Right ventricle myocardium superior (tissue), 1 donor: ENCODE measurements at regions of chr12 and their contacts with region 1.

Region 1: GRCh38 chr12:127108360-127109215 is 1158.4 kb upstream of the TMEM132C start:
- DNase-seq: peak; percentile 63
- ATAC-seq: peak; percentile 79

Region 2: DNA sequence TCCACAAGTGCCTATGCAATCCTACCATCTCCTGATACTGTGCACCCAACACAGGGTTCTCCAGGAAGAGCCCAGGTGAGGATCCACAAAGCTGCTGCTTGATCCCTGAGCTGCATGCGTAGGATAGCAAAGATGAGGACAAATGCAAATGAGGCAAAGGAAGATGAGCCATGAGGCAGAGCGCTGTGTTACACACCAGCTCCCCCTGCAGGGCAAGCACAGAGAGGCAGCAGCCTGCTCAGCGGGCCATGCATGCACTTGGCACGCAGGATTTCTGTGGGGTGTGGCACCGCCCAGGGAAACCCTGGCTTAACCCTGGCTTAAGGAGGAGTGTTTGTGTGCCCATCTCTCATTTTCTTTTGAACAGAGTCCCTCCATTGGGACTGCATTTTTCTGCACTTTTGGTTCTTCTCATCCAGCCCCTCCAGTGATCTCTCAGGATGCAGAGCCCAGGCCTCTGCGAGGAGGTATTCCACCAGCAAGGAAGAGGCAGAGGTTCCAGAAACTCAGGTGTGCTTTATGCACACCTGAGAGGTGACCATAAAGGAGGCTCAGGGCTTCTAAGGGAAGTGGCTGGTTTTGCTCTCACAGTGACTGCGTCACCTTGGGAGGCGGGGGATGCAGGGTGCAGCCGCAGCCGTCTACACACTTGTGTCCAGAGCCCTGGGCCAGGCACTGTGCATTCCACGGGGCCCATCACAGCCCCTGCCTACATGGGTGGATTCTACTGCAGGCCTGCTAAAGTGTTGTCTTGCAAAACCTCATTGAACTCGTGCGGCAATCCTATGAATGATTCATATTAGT is 185.1 kb after region 1 on chr12:
- intact Hi-C with region 1: loop called (anchors 10 kb)
- DNase-seq: peak; percentile 68
- ATAC-seq: peak; percentile 58

Region 3: GRCh38 chr12:127381048-127381668 is 272.6 kb after region 1 on chr12:
- intact Hi-C with region 1: loop called (anchors 5 kb)
- DNase-seq: peak; percentile 43
- ATAC-seq: peak; percentile 73